CD4-positive, alpha-beta memory T cell (primary cell): ENCODE measurements at regions of chr13 and their contacts with region 1.

Region 1: DNA sequence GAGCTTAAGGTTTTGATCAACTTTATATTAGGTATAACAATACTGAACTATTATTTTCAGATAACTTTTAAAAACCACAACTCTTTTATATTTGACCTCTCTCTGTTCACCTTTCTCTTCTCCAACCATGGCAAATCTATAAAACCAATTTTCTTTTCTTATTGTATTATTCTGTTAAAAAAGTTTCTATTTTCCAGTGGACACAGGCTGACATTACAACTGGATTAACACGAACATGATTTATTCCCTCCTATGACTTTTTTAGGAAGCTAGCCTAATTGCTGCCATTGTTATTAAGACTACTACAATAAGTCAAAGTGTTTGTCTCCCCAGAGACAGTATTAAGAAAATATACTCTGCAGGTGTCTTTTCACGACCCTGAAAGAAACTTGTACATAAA is 2291.1 kb upstream of the PCDH20 start:
- DNase-seq: no peak
- H3K4me3 ChIP-seq: no peak overlapping the region
- H3K4me3 Mint-ChIP-seq: no peak overlapping the region
- H3K27ac ChIP-seq: no peak overlapping the region
- H3K27ac Mint-ChIP-seq: no peak overlapping the region
- H3K4me1 ChIP-seq: no peaks in the 10 kb centered on the region
- H3K4me1 Mint-ChIP-seq: no peaks in the 10 kb centered on the region
- H3K27me3 ChIP-seq: no peaks in the 10 kb centered on the region
- H3K27me3 Mint-ChIP-seq: no peaks in the 10 kb centered on the region

Region 2: GRCh38 chr13:63651394-63651793 is 55.4 kb before region 1 on chr13:
- CTCF ChIA-PET with region 1: no interaction called
- POLR2A ChIA-PET with region 1: no interaction called
- intact Hi-C with region 1: loop called (anchors 10 kb)
- DNase-seq: no peak
- H3K4me3 ChIP-seq: no peak overlapping the region
- H3K4me3 Mint-ChIP-seq: no peak overlapping the region
- H3K27ac ChIP-seq: no peak overlapping the region
- H3K27ac Mint-ChIP-seq: no peak overlapping the region
- H3K4me1 ChIP-seq: no peaks in the 10 kb centered on the region
- H3K4me1 Mint-ChIP-seq: no peaks in the 10 kb centered on the region
- H3K27me3 ChIP-seq: no peaks in the 10 kb centered on the region
- H3K27me3 Mint-ChIP-seq: no peaks in the 10 kb centered on the region

Region 3: GRCh38 chr13:63680704-63681103 is 26.0 kb before region 1 on chr13:
- CTCF ChIA-PET with region 1: no interaction called
- POLR2A ChIA-PET with region 1: no interaction called
- intact Hi-C with region 1: no loop called
- DNase-seq: no peak
- H3K4me3 ChIP-seq: no peak overlapping the region
- H3K4me3 Mint-ChIP-seq: no peak overlapping the region
- H3K27ac ChIP-seq: no peak overlapping the region
- H3K27ac Mint-ChIP-seq: no peak overlapping the region
- H3K4me1 ChIP-seq: no peaks in the 10 kb centered on the region
- H3K4me1 Mint-ChIP-seq: no peaks in the 10 kb centered on the region
- H3K27me3 ChIP-seq: no peaks in the 10 kb centered on the region
- H3K27me3 Mint-ChIP-seq: no peaks in the 10 kb centered on the region

Region 4: DNA sequence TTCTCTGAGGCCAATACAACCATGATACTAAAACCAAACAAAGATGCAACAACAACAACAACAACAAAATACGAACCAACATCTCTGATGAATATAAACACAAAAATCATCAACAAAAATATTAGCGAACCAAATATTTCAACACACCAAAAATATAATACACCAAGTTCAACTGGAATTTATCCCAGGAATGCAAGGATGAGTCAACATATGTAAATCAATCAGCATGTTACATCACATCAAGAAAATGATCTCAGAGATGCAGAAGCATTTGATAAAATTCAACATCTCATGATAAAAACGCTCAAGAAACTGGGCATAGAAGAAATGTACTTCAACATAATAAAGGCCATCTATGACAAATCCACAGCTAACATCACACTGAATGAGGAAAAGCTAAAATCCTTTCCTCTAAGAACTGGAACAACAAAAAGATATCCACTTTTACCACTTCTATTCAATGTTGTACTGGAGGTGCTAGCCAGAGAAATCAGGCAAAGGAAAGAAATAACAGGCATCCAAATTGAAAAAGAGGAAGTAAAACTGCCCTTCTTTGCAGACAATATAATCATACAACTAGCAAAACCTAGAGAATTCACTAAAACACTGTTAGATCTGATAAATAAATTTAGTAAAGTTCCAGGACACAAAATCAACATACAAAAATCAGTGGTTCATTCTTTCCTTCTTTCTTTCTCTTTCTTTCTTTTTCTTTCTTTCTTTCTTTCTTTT is 157.6 kb after region 1 on chr13:
- CTCF ChIA-PET with region 1: no interaction called
- POLR2A ChIA-PET with region 1: no interaction called
- intact Hi-C with region 1: no loop called
- DNase-seq: no peak
- H3K4me3 ChIP-seq: no peak overlapping the region
- H3K4me3 Mint-ChIP-seq: no peak overlapping the region
- H3K27ac ChIP-seq: no peak overlapping the region
- H3K27ac Mint-ChIP-seq: no peak overlapping the region
- H3K4me1 ChIP-seq: no peaks in the 10 kb centered on the region
- H3K4me1 Mint-ChIP-seq: peaks cover 0 to 1% (median 0%) of the 10 kb centered on the region in 4 donors
- H3K27me3 ChIP-seq: no peaks in the 10 kb centered on the region
- H3K27me3 Mint-ChIP-seq: no peaks in the 10 kb centered on the region